Right lobe of liver (tissue), 6 donors: ENCODE measurements at regions of chr18 and their contacts with region 1.

Region 1: GRCh38 chr18:3771121-3771971 is 321.4 kb downstream of the TGIF1 start:
- DNase-seq: peak; percentile 86 to 87 (median 87)
- ATAC-seq: peak; percentile 99 to 100 (median 99)
- H3K4me3 ChIP-seq: peak overlapping the region; percentile 10 to 27 (median 16)
- H3K27ac ChIP-seq: peak overlapping the region in 2 of 3 donors; percentile 41 to 52
- H3K4me1 ChIP-seq: peaks cover 0 to 12% (median 0%) of the 10 kb centered on the region in 4 donors
- H3K27me3 ChIP-seq: no peaks in the 10 kb centered on the region
- CTCF ChIP-seq: peak; percentile 94 to 99 (median 96)
- POLR2A ChIP-seq: no peak

Region 2: GRCh38 chr18:3397071-3397745 is 374.1 kb before region 1 on chr18:
- intact Hi-C with region 1: no loop called
- DNase-seq: no peak
- ATAC-seq: no peak
- H3K4me3 ChIP-seq: no peak overlapping the region
- H3K27ac ChIP-seq: no peak overlapping the region
- H3K4me1 ChIP-seq: no peaks in the 10 kb centered on the region
- H3K27me3 ChIP-seq: no peaks in the 10 kb centered on the region
- CTCF ChIP-seq: no peak
- POLR2A ChIP-seq: no peak

Region 3: DNA sequence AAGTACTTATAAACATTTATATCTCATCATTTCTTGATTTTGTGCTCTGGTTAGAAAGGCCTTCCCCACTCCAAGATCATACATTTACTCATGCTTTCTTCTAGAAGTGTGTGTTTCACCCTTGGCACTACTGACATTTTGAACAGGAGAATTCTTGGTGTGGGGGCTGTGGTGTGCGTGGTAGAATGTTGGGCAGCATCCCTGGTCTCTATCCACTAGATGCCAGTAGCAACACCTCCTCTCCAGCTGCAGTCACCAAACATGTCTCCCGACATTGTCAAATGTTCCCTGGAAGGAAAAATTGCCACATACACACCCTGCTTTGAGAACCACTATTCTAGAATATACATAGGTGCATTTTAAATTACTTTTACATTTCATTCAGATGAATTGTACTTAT is 330.1 kb before region 1 on chr18:
- intact Hi-C with region 1: no loop called
- DNase-seq: peak in 1 of 3 donors; percentile 53
- ATAC-seq: peak; percentile 92 to 97 (median 94)
- H3K4me3 ChIP-seq: no peak overlapping the region
- H3K27ac ChIP-seq: peak overlapping the region in 1 of 3 donors; percentile 54
- H3K4me1 ChIP-seq: peaks cover 0 to 11% (median 3%) of the 10 kb centered on the region in 4 donors
- H3K27me3 ChIP-seq: no peaks in the 10 kb centered on the region
- CTCF ChIP-seq: peak; percentile 41 to 53 (median 50)
- POLR2A ChIP-seq: no peak

Region 4: GRCh38 chr18:3634250-3634939 is 137.0 kb before region 1 on chr18:
- intact Hi-C with region 1: no loop called
- DNase-seq: no peak
- ATAC-seq: no peak
- H3K4me3 ChIP-seq: no peak overlapping the region
- H3K27ac ChIP-seq: no peak overlapping the region
- H3K4me1 ChIP-seq: no peaks in the 10 kb centered on the region
- H3K27me3 ChIP-seq: no peaks in the 10 kb centered on the region
- CTCF ChIP-seq: no peak
- POLR2A ChIP-seq: no peak

Region 5: GRCh38 chr18:3995476-3996102 is 224.2 kb after region 1 on chr18:
- intact Hi-C with region 1: loop called in 1 of 2 experiments (anchors 10 kb)
- DNase-seq: peak in 2 of 3 donors; percentile 31 to 56
- ATAC-seq: peak; percentile 79 to 87 (median 82)
- H3K4me3 ChIP-seq: no peak overlapping the region
- H3K27ac ChIP-seq: no peak overlapping the region
- H3K4me1 ChIP-seq: no peaks in the 10 kb centered on the region
- H3K27me3 ChIP-seq: no peaks in the 10 kb centered on the region
- CTCF ChIP-seq: peak; percentile 48 to 92 (median 89)
- POLR2A ChIP-seq: no peak